AG04450 (cell line): ENCODE measurements at regions of chr10 and their contacts with region 1.

Region 1: GRCh38 chr10:101095542-101096213 is 33.9 kb downstream of the KAZALD1 start:
- DNase-seq: peak; percentile 11
- H3K4me3 ChIP-seq: no peak overlapping the region
- H3K27ac ChIP-seq: no peak overlapping the region
- H3K27me3 ChIP-seq: peaks cover 66% of the 10 kb centered on the region
- CTCF ChIP-seq: peak; percentile 83

Region 2: DNA sequence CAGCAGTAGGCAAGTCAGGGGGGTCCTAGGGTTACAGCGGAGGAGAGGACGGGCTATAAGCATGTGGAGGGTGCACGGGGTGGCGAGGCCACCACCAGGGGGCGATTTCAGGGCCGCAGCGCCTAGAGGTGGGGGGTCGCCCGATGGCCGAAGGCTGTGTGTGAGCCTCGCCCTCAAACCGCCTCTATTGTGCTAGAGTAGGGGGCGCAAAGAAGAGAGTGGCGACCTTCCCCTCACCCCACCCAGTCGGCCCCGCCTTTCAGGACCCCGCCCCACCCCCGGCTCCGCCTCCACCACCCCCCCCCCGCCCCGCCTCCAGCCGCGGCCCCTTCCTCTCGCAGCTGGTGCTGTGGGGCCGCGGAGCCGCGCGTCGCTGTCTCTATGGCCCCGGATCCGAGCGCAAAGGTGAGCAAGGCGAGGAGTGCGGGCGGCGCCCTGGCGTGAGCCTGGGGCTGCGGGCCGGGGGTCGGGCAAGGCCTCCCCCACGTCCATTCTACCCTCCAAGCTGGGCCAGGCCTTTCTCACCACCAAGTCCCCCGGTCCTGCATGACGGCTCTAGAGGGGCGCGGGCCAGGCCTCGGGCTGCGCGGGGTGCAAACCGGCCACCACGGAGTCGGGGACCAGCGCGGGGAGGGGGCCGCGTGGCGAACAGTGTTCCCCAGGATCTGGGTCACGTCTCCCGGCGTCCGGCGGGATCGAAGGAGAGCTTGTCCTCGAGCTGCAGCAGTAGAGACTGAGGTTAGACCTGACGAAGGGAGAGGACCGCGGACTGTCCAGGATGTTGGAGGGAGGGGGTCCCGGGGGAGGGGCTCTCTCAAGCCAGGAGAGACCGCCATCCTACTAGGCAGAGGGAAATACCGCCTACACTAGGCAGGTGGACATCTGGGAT is 126.2 kb before region 1 on chr10 and contains the start of gene SEMA4G:
- CTCF ChIA-PET with region 1: no interaction called
- POLR2A ChIA-PET with region 1: no interaction called
- DNase-seq: no peak
- H3K4me3 ChIP-seq: peak within 1 kb of the TSS; percentile 67
- H3K27ac ChIP-seq: peak within 1 kb of the TSS; percentile 21
- H3K27me3 ChIP-seq: no peaks in the 10 kb centered on the region
- CTCF ChIP-seq: peak; percentile 78
- polyA plus RNA-seq, gene SEMA4G: 10.5 and 14.4 TPM in 2 replicates

Region 3: DNA sequence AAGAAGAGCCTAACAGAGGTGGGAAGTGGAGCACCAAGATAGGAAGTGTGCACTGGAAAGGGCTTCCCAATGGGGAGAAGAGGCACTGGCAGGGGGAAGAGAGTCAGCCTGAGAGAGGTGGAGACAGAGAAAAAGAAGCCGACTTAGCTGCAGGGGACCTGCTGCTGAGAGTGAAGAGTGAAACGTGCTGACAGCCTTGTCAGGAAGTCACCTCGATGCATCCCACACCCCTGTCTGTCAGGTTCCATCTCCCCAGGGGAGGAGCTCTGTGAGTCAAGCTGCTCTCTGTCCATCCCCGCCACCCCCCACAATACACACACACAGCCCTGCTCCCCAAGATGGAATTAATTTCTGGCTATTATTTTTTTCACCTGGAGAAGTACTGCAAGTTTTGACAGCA is 19.9 kb before region 1 on chr10:
- CTCF ChIA-PET with region 1: interaction called, 21 read pairs
- POLR2A ChIA-PET with region 1: no interaction called
- DNase-seq: no peak
- H3K4me3 ChIP-seq: no peak overlapping the region
- H3K27ac ChIP-seq: no peak overlapping the region
- H3K27me3 ChIP-seq: peaks cover 61% of the 10 kb centered on the region
- CTCF ChIP-seq: no peak